ENCODE measurements at regions of chr6 and their contacts with region 1.

Region 1: DNA sequence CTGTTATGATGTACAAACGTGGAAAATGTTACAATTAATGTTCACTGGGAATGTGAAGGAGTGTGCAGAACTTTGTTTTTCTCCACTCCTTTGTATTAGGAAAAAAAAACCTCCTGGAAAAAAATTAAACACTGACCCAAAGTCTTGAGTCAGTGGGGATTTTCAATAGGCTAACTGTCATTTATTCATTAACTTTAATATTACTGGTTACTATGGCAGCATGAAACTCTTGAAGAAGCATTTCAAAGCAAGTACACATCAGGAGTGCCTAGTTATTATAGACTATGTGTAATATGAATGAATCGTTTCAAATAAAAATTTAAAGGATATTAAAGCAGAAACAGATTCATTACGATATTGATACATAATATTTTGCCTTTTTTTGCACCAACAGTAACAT is 232.7 kb downstream of the SYNE1 start:
- DNase-seq: no peak
- H3K4me3 ChIP-seq: no peak overlapping the region
- H3K27ac ChIP-seq: no peak overlapping the region
- H3K4me1 ChIP-seq: no peaks in the 10 kb centered on the region
- H3K27me3 ChIP-seq: no peaks in the 10 kb centered on the region

Region 2: GRCh38 chr6:152054441-152054840 is 350.0 kb before region 1 on chr6:
- CTCF ChIA-PET with region 1: no interaction called
- POLR2A ChIA-PET with region 1: no interaction called
- DNase-seq: no peak
- H3K4me3 ChIP-seq: no peak overlapping the region
- H3K27ac ChIP-seq: no peak overlapping the region
- H3K4me1 ChIP-seq: no peaks in the 10 kb centered on the region
- H3K27me3 ChIP-seq: no peaks in the 10 kb centered on the region

Region 3: GRCh38 chr6:152441902-152442301 is 37.4 kb after region 1 on chr6:
- CTCF ChIA-PET with region 1: no interaction called
- POLR2A ChIA-PET with region 1: interaction called, 10 read pairs
- DNase-seq: no peak
- H3K4me3 ChIP-seq: no peak overlapping the region
- H3K27ac ChIP-seq: no peak overlapping the region
- H3K4me1 ChIP-seq: no peaks in the 10 kb centered on the region
- H3K27me3 ChIP-seq: no peaks in the 10 kb centered on the region

Region 4: DNA sequence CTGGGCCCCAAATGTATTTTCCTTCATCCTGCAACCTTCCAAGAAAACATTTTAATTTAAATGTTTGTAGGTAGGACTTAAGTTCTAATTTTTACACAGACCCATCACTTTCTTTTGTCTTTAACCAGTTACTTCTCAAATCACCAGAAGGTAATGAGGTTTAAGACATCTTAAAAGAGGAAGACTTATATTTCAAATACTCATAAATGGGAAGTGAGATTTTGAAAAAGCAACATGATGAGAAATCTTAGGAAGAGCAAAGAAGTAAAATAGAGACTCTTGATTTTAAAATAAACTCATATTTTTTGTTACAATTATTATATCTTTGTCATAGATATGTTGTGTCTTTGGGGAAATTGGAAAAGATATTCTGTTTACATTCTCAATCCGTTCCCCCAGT is 150.4 kb after region 1 on chr6:
- CTCF ChIA-PET with region 1: no interaction called
- POLR2A ChIA-PET with region 1: no interaction called
- DNase-seq: no peak
- H3K4me3 ChIP-seq: no peak overlapping the region
- H3K27ac ChIP-seq: no peak overlapping the region
- H3K4me1 ChIP-seq: peaks cover 0 to 2% (median 0%) of the 10 kb centered on the region in 4 experiments
- H3K27me3 ChIP-seq: no peaks in the 10 kb centered on the region